Gastrocnemius medialis (tissue), 4 donors: ENCODE measurements at regions of chr18 and their contacts with region 1.

Region 1: DNA sequence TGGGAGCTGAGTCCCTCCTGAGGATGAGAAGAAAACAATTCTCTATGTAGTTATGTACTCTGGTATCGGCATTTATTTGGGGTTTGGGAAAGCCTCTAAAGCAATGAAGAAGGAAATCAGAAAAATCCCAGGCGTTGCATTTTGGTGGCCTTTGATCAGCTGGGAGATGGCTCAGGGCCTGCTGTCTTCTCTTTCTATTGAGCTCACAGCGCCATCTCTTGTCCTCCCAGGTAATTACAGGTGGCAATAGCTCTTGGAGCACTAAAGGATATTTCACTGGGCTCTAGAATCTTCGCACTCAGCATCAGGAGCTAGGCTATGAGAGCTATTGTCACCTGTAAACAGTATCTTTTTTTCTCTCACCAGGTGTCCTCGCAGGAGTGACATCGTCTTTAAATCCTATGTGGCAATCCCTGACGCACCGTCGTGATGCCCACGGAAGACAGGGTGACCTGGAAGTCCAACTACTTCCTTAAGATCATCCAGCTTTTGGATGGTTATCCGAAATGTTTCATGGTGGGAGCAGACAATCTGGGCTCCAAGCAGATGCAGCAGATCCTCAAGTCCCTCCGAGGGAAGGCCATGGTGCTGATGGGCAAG is 76.1 kb upstream of the PMAIP1 start:
- DNase-seq: peak; percentile 5 to 38
- ATAC-seq: peak; percentile 39 to 45
- H3K4me3 ChIP-seq: no peak overlapping the region
- H3K27ac ChIP-seq: no peak overlapping the region
- H3K4me1 ChIP-seq: no peaks in the 10 kb centered on the region
- H3K27me3 ChIP-seq: no peaks in the 10 kb centered on the region
- CTCF ChIP-seq: peak; percentile 30 to 62 (median 56)
- POLR2A ChIP-seq: no peak

Region 2: DNA sequence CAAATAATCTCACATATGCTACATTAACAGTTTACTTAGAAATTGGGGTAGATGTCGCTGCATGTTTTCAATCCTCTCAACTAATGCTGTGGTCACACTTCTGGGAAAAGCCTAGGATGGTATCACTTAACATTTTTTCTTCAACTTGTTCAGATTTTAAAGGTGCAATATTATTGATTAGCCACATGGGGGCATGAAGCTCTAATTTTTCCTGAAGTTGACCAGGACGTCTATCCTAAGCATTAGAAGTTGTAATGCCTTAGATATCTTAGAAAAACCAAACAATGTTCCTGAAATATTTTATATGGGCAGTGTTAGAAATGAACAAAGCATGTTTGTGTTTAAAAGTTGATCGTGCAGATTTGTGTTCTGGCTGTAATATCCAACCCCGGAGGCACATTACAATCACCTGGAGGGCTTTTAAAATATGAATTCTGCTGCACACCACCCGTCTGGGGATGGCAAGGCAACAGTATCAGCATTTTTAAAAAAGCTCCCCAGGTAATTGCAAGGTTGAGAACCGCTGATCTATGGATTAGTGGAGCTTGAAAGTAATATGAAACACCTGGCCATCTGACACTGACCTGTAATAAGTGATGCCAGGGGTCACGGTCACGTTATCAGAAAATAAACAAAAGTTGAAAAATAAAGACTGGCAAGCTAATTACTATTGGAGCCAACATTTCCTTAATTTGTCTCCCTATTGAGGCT is 364.2 kb before region 1 on chr18:
- in situ Hi-C with region 1: loop called (anchors 5 to 25 kb)
- intact Hi-C with region 1: loop called (anchors 1 kb)
- DNase-seq: no peak
- ATAC-seq: no peak
- H3K4me3 ChIP-seq: no peak overlapping the region
- H3K27ac ChIP-seq: no peak overlapping the region
- H3K4me1 ChIP-seq: no peaks in the 10 kb centered on the region
- H3K27me3 ChIP-seq: no peaks in the 10 kb centered on the region
- CTCF ChIP-seq: peak; percentile 25 to 50 (median 32)
- POLR2A ChIP-seq: no peak

Region 3: GRCh38 chr18:59639821-59640220 is 183.9 kb before region 1 on chr18:
- in situ Hi-C with region 1: no loop called
- intact Hi-C with region 1: no loop called
- DNase-seq: no peak
- ATAC-seq: no peak
- H3K4me3 ChIP-seq: no peak overlapping the region
- H3K27ac ChIP-seq: no peak overlapping the region
- H3K4me1 ChIP-seq: no peaks in the 10 kb centered on the region
- H3K27me3 ChIP-seq: no peaks in the 10 kb centered on the region
- CTCF ChIP-seq: no peak
- POLR2A ChIP-seq: no peak

Region 4: DNA sequence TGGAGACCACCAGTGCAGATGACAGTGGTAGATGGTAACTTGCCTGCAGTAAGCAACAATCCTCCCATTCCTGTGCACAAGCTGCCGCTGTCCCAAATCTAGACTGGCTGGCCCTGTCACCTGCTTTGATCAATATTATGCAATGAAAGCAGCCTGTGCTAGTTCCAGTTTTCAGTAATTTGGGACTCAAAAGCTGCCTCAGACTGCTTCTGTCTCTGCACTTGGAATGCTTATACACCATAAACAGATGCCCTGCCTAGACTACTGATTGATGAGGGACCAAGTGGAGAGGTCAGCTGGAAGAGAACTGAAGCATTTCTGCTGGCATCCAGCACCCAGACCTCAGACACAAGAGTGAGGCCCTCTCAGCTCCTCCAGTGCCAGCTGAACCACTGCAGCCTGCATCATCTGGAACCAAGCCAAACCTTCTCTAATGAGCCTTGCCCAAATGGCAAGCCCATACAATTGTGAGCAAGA is 151.4 kb before region 1 on chr18:
- in situ Hi-C with region 1: no loop called
- intact Hi-C with region 1: no loop called
- DNase-seq: no peak
- ATAC-seq: no peak
- H3K4me3 ChIP-seq: no peak overlapping the region
- H3K27ac ChIP-seq: no peak overlapping the region
- H3K4me1 ChIP-seq: no peaks in the 10 kb centered on the region
- H3K27me3 ChIP-seq: no peaks in the 10 kb centered on the region
- CTCF ChIP-seq: no peak
- POLR2A ChIP-seq: no peak